ENCODE measurements at regions of chr3 and their contacts with region 1.

Region 1: GRCh38 chr3:168165390-168166269 is 69.9 kb upstream of the GOLIM4 start:
- DNase-seq: no peak
- ATAC-seq: peak; percentile 88
- H3K4me3 ChIP-seq: no peak overlapping the region
- H3K27ac ChIP-seq: no peak overlapping the region
- H3K4me1 ChIP-seq: no peaks in the 10 kb centered on the region
- H3K27me3 ChIP-seq: no peaks in the 10 kb centered on the region
- CTCF ChIP-seq: peak; percentile 77

Region 2: GRCh38 chr3:168047190-168047795 is 118.3 kb before region 1 on chr3:
- intact Hi-C with region 1: loop called (anchors 2 kb)
- DNase-seq: no peak
- ATAC-seq: peak; percentile 95
- H3K4me3 ChIP-seq: no peak overlapping the region
- H3K27ac ChIP-seq: no peak overlapping the region
- H3K4me1 ChIP-seq: peaks cover 6% of the 10 kb centered on the region
- H3K27me3 ChIP-seq: no peaks in the 10 kb centered on the region
- CTCF ChIP-seq: peak; percentile 86

Measured in upper lobe of right lung (tissue), 1 donor.